ENCODE measurements at regions of chr12 and their contacts with region 1.

Region 1: DNA sequence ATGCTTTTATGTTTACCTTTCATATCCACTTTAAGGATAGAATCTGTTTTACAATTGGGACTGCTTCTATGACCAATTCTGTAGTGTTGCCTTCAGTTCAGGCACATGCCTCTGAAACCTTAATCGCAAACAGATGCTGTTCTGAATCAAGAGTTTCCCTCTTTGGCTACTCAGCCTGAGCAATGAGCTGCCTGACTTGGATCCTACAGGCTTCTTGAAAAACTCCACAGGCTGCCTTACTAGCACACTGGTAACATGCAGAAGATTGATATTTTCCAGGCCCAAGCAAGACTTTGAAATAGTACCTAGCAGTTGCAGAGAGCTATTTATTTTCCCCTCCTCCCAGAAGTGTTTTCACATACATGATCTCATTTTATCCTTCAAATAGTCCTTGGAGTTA is 34.8 kb upstream of the PMCH start:
- DNase-seq: peak in 1 of 2 donors; percentile 27
- H3K4me3 ChIP-seq: no peak overlapping the region
- H3K27ac ChIP-seq: peak overlapping the region; percentile 48 to 64
- H3K4me1 ChIP-seq: no peaks in the 10 kb centered on the region
- H3K27me3 ChIP-seq: no peaks in the 10 kb centered on the region
- CTCF ChIP-seq: no peak
- POLR2A ChIP-seq: no peak

Region 2: GRCh38 chr12:100404769-100405407 is 1827.6 kb before region 1 on chr12:
- intact Hi-C with region 1: loop called (anchors 10 kb)
- DNase-seq: no peak
- H3K4me3 ChIP-seq: no peak overlapping the region
- H3K27ac ChIP-seq: no peak overlapping the region
- H3K4me1 ChIP-seq: no peaks in the 10 kb centered on the region
- H3K27me3 ChIP-seq: no peaks in the 10 kb centered on the region
- CTCF ChIP-seq: peak in 1 of 3 donors; percentile 15
- POLR2A ChIP-seq: no peak

Region 3: DNA sequence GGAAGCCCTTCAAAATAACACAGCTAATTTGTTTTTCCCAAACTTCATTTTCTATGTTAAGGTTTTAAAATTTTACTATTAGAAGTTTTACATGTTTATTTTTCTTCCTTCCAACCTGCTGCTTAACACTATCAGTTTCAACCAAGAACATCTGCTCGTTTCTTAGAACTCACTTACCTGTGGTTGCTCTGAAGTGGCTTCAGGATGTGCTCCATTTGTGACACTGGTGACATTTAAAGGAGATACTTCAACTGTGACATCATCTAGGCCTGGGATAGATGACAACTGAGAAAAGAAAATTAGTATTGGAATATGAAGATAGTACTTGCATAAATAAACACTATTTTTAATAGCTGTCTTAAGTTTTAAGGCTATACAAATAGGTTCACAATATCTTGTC is 188.5 kb before region 1 on chr12:
- intact Hi-C with region 1: no loop called
- DNase-seq: no peak
- H3K4me3 ChIP-seq: no peak overlapping the region
- H3K27ac ChIP-seq: no peak overlapping the region
- H3K4me1 ChIP-seq: no peaks in the 10 kb centered on the region
- H3K27me3 ChIP-seq: no peaks in the 10 kb centered on the region
- CTCF ChIP-seq: no peak
- POLR2A ChIP-seq: no peak

Region 4: GRCh38 chr12:102220736-102221135 is 11.7 kb before region 1 on chr12:
- intact Hi-C with region 1: no loop called
- DNase-seq: no peak
- H3K4me3 ChIP-seq: no peak overlapping the region
- H3K27ac ChIP-seq: no peak overlapping the region
- H3K4me1 ChIP-seq: no peaks in the 10 kb centered on the region
- H3K27me3 ChIP-seq: no peaks in the 10 kb centered on the region
- CTCF ChIP-seq: no peak
- POLR2A ChIP-seq: no peak

Region 5: GRCh38 chr12:102326987-102327386 is 94.5 kb after region 1 on chr12:
- intact Hi-C with region 1: no loop called
- DNase-seq: no peak
- H3K4me3 ChIP-seq: no peak overlapping the region
- H3K27ac ChIP-seq: no peak overlapping the region
- H3K4me1 ChIP-seq: no peaks in the 10 kb centered on the region
- H3K27me3 ChIP-seq: no peaks in the 10 kb centered on the region
- CTCF ChIP-seq: no peak
- POLR2A ChIP-seq: no peak

Region 6: GRCh38 chr12:104108755-104109445 is 1876.5 kb after region 1 on chr12:
- intact Hi-C with region 1: no loop called
- DNase-seq: peak; percentile 69 to 76
- H3K4me3 ChIP-seq: no peak overlapping the region
- H3K27ac ChIP-seq: no peak overlapping the region
- H3K4me1 ChIP-seq: no peaks in the 10 kb centered on the region
- H3K27me3 ChIP-seq: no peaks in the 10 kb centered on the region
- CTCF ChIP-seq: peak; percentile 74 to 77 (median 77)
- POLR2A ChIP-seq: no peak

Measured in breast epithelium (tissue), 4 donors.